HepG2 (cell line): ENCODE measurements at regions of chr16 and their contacts with region 1.

Region 1: GRCh38 chr16:88442727-88443576 is 10.1 kb upstream of the ZFPM1 start:
- DNase-seq: peak; percentile 77
- ATAC-seq: peak; percentile 91
- H3K4me3 ChIP-seq: peak overlapping the region; percentile 4 to 66 (median 17); a peak in 3 of 6 replicates
- H3K27ac ChIP-seq: no peak overlapping the region
- H3K4me1 ChIP-seq: peaks cover 16% of the 10 kb centered on the region
- H3K27me3 ChIP-seq: peaks cover 45 to 94% of the 10 kb centered on the region in 2 experiments
- CTCF ChIP-seq: peak; percentile 100
- EP300 ChIP-seq: 0 out of 4 replicates have a peak, but pooled peaks have one; percentile 16 to 20
- POLR2A ChIP-seq: no peak
- RAD21 ChIP-seq: peak; percentile 100

Region 2: GRCh38 chr16:88405216-88406060 is 37.5 kb before region 1 on chr16:
- CTCF ChIA-PET with region 1: no interaction called
- POLR2A ChIA-PET with region 1: no interaction called
- in situ Hi-C with region 1: no loop called
- intact Hi-C with region 1: no loop called
- DNase-seq: no peak
- ATAC-seq: no peak
- H3K4me3 ChIP-seq: no peak overlapping the region
- H3K27ac ChIP-seq: no peak overlapping the region
- H3K4me1 ChIP-seq: no peaks in the 10 kb centered on the region
- H3K27me3 ChIP-seq: peaks cover 15 to 65% of the 10 kb centered on the region in 2 experiments
- CTCF ChIP-seq: no peak
- EP300 ChIP-seq: no peak
- POLR2A ChIP-seq: no peak
- RAD21 ChIP-seq: no peak

Region 3: DNA sequence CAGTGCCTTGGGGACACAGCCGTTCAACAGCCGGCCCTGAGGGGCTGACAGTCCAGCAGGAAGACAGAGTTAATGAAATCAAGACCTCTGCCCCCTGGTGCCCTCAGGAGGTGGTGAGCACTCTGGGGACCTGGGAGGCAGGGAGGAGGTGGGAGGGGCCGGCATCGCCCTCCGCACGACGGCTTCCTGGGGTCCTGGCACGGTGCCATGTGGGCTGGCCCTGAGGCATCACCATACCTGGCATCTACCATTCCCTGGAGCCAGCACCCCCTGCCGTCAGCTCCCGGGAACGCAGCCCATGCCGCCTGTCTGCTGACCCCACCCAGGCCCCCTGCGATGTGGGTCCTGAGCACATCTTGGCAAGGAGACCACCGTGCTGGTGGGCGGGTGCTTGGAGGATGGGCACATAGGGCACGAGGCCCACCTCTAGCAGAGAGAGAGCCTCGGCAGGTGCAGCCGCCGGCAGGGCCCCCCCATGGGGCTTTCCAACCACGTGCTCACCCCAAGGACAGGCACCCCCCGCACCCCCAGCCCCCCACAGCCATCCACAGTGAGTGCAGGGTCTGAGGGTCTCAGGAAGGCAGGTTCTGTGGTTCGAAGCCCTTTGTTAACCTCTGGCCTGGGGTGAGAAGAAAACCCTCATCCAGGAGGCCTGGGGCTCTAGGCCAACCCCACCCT is 62.6 kb after region 1 on chr16:
- CTCF ChIA-PET with region 1: interaction called, 17 read pairs
- POLR2A ChIA-PET with region 1: interaction called, 4 read pairs
- in situ Hi-C with region 1: no loop called
- intact Hi-C with region 1: loop called (anchors 2 kb)
- DNase-seq: peak; percentile 79
- ATAC-seq: peak; percentile 21
- H3K4me3 ChIP-seq: peak overlapping the region; percentile 19 to 56 (median 32); a peak in 4 of 6 replicates
- H3K27ac ChIP-seq: peak overlapping the region; percentile 92
- H3K4me1 ChIP-seq: peaks cover 75% of the 10 kb centered on the region
- H3K27me3 ChIP-seq: no peaks in the 10 kb centered on the region
- CTCF ChIP-seq: peak; percentile 82
- EP300 ChIP-seq: no peak
- POLR2A ChIP-seq: no peak
- RAD21 ChIP-seq: peak; percentile 86

Region 4: DNA sequence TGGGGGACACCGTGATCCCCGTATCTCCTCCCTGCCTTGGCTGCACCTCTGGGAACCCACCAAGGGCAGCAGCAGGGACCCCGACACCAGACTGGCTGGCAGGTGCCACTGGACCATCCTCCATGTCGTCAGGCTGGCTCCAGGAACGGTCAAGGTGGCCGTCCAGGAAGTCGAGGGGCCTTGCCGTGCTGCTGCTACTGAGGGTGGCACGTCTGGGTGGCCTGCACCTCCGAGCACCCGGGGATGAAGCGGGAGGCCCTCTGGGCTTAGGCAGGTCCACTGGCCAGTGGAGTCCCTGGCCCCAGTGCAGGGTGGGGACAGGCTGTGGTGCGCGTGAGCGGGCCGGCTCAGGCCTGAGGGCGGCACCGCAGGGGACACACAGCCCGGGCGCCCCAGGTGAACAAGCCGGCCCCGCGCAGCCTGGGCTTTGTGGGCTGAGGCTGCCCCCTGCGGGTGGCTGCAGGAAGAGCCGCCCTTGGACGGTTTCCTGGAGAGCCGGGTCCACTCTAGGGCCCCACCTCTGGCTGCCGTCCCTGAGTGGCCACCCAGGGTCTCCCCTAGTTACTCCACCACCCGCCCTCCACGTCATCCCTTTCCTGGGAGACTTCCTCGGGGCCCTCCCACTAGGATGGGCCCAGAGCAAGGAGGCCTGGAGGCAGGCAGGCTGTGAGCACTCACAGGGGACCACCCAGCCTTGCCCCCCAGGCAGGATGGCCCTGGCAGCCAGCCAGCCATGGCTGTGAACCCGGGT is 84.4 kb after region 1 on chr16:
- CTCF ChIA-PET with region 1: interaction called, 88 read pairs
- POLR2A ChIA-PET with region 1: no interaction called
- in situ Hi-C with region 1: no loop called
- intact Hi-C with region 1: loop called (anchors 2 kb)
- DNase-seq: peak; percentile 51
- ATAC-seq: peak; percentile 79
- H3K4me3 ChIP-seq: no peak overlapping the region
- H3K27ac ChIP-seq: no peak overlapping the region
- H3K4me1 ChIP-seq: peaks cover 31% of the 10 kb centered on the region
- H3K27me3 ChIP-seq: no peaks in the 10 kb centered on the region
- CTCF ChIP-seq: peak; percentile 97
- EP300 ChIP-seq: peak in 1 of 2 experiments; percentile 12; a peak in 1 of 4 replicates
- POLR2A ChIP-seq: no peak
- RAD21 ChIP-seq: peak; percentile 100

Region 5: GRCh38 chr16:88561485-88562369 is 118.8 kb after region 1 on chr16:
- CTCF ChIA-PET with region 1: interaction called, 27 read pairs
- POLR2A ChIA-PET with region 1: no interaction called
- in situ Hi-C with region 1: no loop called
- intact Hi-C with region 1: loop called (anchors 1 kb)
- DNase-seq: no peak
- ATAC-seq: peak; percentile 34
- H3K4me3 ChIP-seq: peak overlapping the region in 1 of 3 experiments; percentile 50; a peak in 1 of 6 replicates
- H3K27ac ChIP-seq: no peak overlapping the region
- H3K4me1 ChIP-seq: peaks cover 22% of the 10 kb centered on the region
- H3K27me3 ChIP-seq: peaks cover 5 to 25% of the 10 kb centered on the region in 2 experiments; a peak in 4 of 5 replicates
- CTCF ChIP-seq: peak; percentile 84
- EP300 ChIP-seq: no peak
- POLR2A ChIP-seq: no peak
- RAD21 ChIP-seq: peak; percentile 65